PC-3 (cell line): ENCODE measurements at regions of chr6 and their contacts with region 1.

Region 1: DNA sequence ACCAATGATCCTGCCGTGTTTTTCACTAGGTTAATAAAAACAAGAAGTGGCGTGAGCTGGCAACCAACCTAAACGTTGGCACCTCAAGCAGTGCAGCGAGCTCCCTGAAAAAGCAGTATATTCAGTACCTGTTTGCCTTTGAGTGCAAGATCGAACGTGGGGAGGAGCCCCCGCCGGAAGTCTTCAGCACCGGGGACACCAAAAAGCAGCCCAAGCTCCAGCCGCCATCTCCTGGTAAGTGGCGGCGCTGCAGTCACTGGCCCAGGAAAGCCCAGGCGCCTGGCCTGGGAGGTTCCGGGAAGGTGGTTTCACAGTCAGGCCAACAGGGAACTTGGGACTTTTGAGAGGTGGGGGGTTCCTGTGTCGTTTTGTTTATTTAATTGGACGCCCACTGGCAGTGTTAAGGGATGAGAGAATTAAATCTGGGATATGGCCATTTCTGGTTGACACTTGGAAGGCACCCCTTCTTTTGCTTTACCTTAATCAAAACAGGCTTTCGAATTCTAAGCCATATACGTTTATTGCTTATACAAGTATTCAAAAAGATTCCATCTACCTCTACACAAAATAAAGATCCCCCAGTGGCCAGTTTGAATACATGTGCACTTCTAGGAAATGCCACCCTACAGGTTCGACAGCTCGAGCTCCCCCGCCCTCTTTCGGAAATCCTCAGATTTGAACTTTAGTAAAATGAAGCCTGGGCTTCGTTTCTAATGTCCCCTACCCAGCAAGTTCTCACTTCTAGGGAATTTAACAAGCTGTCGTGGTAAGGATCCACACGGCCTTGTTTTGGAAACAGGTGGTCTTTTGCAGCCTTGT is 138.9 kb downstream of the TMEM242 start:
- DNase-seq: peak; percentile 71
- ATAC-seq: peak; percentile 49
- H3K4me3 ChIP-seq: no peak overlapping the region
- H3K27ac ChIP-seq: peak overlapping the region; percentile 25
- H3K4me1 ChIP-seq: peaks cover 37% of the 10 kb centered on the region
- H3K27me3 ChIP-seq: no peaks in the 10 kb centered on the region
- CTCF ChIP-seq: peak; percentile 90

Region 2: DNA sequence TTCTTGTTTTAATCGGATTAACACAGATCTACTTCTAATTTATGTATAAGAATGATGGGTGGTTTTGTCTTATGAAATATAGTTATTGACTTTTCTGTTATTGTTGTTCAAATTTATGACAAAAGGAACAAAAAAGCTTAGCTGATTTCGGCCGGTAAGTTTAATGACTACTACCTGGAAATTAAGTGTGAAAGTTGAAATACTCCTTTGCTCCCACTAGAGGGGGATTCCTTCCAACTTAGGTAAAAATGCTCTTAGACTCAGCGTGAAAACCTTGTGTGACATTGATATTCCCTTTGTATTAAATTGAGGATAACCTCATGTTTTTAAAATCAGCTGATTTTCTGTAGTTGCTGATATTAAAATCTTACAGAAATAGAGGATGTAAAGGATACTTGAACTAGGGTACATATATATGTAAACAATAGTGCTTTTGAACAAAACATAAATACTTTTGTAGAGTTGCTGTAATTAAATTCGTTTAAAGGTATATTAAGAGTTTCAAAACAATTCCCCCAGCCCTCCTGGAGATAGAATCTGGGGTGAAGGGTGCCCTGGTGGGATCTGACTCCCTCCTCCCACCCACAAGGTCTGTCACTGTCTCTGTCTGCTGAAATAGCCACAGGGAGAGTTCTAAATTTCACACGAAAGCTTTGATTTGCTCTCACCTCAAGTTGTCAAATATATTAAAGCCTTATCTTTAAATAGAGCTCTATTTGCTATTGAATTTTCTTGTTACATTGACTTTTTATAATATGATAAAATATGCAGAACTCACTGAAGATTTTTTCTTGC is 149.8 kb before region 1 on chr6:
- CTCF ChIA-PET with region 1: no interaction called
- POLR2A ChIA-PET with region 1: no interaction called
- intact Hi-C with region 1: loop called (anchors 1 kb)
- DNase-seq: peak; percentile 53
- ATAC-seq: peak; percentile 61
- H3K4me3 ChIP-seq: peak overlapping the region; percentile 71
- H3K27ac ChIP-seq: no peak overlapping the region
- H3K4me1 ChIP-seq: peaks cover 23% of the 10 kb centered on the region
- H3K27me3 ChIP-seq: no peaks in the 10 kb centered on the region
- CTCF ChIP-seq: peak; percentile 67